CD8-positive, alpha-beta T cell (primary cell): ENCODE measurements at regions of chr3 and their contacts with region 1.

Region 1: GRCh38 chr3:16362770-16363169 is 97.8 kb downstream of the OXNAD1 start:
- DNase-seq: no peak
- ATAC-seq: no peak
- H3K4me3 ChIP-seq: no peak overlapping the region
- H3K4me3 Mint-ChIP-seq: no peak overlapping the region
- H3K27ac ChIP-seq: no peak overlapping the region
- H3K27ac Mint-ChIP-seq: peak overlapping the region; percentile 64
- H3K4me1 ChIP-seq: peaks cover 7% of the 10 kb centered on the region
- H3K4me1 Mint-ChIP-seq: peaks cover 52% of the 10 kb centered on the region
- H3K27me3 ChIP-seq: no peaks in the 10 kb centered on the region
- H3K27me3 Mint-ChIP-seq: no peaks in the 10 kb centered on the region
- CTCF ChIP-seq: no peak

Region 2: GRCh38 chr3:16427103-16427965 is 64.6 kb after region 1 on chr3:
- CTCF ChIA-PET with region 1: no interaction called
- POLR2A ChIA-PET with region 1: no interaction called
- intact Hi-C with region 1: loop called in 1 of 2 experiments (anchors 5 kb)
- DNase-seq: no peak
- ATAC-seq: no peak
- H3K4me3 ChIP-seq: no peak overlapping the region
- H3K4me3 Mint-ChIP-seq: no peak overlapping the region
- H3K27ac ChIP-seq: no peak overlapping the region
- H3K27ac Mint-ChIP-seq: peak overlapping the region; percentile 43
- H3K4me1 ChIP-seq: no peaks in the 10 kb centered on the region
- H3K4me1 Mint-ChIP-seq: peaks cover 38% of the 10 kb centered on the region
- H3K27me3 ChIP-seq: no peaks in the 10 kb centered on the region
- H3K27me3 Mint-ChIP-seq: no peaks in the 10 kb centered on the region
- CTCF ChIP-seq: no peak